OCI-LY7 (cell line): ENCODE measurements at regions of chr12 and their contacts with region 1.

Region 1: DNA sequence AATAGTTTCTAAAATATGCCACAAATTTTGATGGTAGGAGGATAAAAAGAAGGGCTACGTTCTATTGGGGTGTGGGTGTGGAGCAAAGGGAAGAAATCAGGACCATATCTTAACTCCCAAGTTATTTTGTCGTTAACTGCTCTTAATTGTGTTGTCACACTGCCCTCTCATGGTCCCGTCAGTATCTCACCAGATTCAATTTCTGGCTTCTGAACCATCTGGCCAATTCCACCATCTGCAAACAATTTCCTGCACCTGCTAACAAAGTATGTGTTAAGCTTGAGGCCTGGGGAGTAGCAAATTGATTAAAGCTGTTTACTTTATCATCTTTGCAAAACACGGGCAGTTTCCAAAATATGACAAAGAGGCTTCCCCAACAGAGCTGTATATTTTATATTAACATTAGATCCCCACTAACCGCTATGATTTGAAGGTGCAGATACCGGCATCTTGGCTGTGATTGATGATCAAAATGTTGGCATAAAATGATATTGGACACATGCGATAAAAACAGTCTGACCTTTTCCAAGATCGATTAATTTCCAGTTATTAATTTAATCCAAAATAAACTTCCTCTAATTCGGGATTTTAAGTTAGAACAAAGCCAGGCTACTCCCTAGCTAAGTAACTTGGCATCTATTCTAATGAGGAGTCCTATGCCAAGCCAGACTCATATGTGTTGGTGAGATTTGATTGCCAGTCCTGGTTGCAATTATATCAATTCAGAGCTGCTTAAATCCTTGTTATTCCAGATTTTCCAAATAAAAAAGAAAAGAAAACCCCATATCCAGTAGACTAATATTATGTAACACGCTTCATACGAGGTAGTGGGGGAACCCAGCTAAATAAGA is 6.9 kb upstream of the DNM1L start:
- DNase-seq: peak; percentile 89
- H3K4me3 ChIP-seq: no peak overlapping the region
- H3K27ac ChIP-seq: peak overlapping the region; percentile 20
- H3K4me1 ChIP-seq: peaks cover 23% of the 10 kb centered on the region
- CTCF ChIP-seq: peak; percentile 88

Region 2: GRCh38 chr12:32399337-32400113 is 272.6 kb before region 1 on chr12 and contains the start of gene FGD4:
- CTCF ChIA-PET with region 1: no interaction called
- POLR2A ChIA-PET with region 1: no interaction called
- intact Hi-C with region 1: loop called (anchors 1 kb)
- DNase-seq: peak; percentile 88
- H3K4me3 ChIP-seq: peak within 1 kb of the TSS; percentile 73
- H3K27ac ChIP-seq: peak within 1 kb of the TSS; percentile 25
- H3K4me1 ChIP-seq: peaks cover 41% of the 10 kb centered on the region
- CTCF ChIP-seq: peak; percentile 83
- total RNA-seq, gene FGD4: 19.3 and 21.8 TPM in 2 replicates